Caco-2 (cell line): ENCODE measurements at regions of chr17 and their contacts with region 1.

Region 1: DNA sequence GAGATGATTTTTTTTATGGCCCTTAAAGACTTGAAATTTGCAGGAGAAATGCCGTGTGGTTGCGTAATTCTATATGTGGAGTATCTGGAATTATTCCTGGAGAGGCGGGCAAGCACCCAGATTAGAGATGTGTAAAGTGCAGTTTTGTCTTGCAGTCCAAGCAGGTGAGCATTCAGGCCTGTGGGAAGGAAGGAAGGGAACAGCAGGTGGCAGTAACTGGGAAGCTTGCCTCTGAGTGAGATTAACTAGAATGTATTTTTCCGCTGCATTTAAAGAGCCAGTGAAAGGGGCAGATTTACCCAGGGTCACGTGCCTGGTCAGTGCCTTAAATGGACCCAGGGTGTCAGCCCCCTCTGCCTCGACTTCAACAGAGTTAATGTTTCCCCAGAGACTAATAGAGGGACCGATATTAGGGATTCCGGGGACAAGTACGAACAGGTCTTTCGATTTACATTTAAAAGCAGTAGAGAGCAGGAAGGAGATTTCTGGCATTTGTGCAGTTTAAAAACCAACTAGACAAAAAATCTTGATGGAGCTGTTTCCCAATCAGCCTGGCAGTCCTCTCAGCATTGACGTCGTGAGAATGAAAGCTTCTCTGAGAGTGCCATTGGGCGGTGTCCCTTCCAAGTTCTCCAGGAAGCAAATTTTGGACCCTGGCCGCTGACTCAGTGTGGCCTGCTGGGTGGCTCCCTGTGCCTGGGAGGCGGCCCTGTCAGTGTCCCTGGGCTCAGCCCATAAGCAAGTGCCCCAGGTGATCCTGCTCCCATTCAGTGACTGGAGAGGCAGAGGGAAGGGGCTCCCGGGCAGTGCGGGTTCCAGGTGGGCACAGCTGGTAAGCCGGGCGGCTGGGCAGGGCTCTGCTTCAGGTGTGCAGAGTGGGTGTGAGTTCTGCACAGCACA is 38.2 kb downstream of the KSR1 start:
- DNase-seq: peak; percentile 92 to 94
- H3K4me3 ChIP-seq: peak overlapping the region; percentile 32
- H3K4me3 Mint-ChIP-seq: peak overlapping the region; percentile 82
- H3K27ac Mint-ChIP-seq: peak overlapping the region; percentile 92
- H3K4me1 ChIP-seq: peaks cover 73% of the 10 kb centered on the region
- H3K4me1 Mint-ChIP-seq: peaks cover 75% of the 10 kb centered on the region
- H3K27me3 ChIP-seq: no peaks in the 10 kb centered on the region
- H3K27me3 Mint-ChIP-seq: no peaks in the 10 kb centered on the region
- CTCF ChIP-seq: peak; percentile 88 to 99

Region 2: GRCh38 chr17:27236717-27237315 is 257.6 kb before region 1 on chr17:
- CTCF ChIA-PET with region 1: no interaction called
- POLR2A ChIA-PET with region 1: no interaction called
- intact Hi-C with region 1: loop called (anchors 10 kb)
- DNase-seq: peak; percentile 69 to 75
- H3K4me3 ChIP-seq: no peak overlapping the region
- H3K4me3 Mint-ChIP-seq: no peak overlapping the region
- H3K27ac Mint-ChIP-seq: no peak overlapping the region
- H3K4me1 ChIP-seq: peaks cover 27% of the 10 kb centered on the region
- H3K4me1 Mint-ChIP-seq: peaks cover 6% of the 10 kb centered on the region
- H3K27me3 ChIP-seq: no peaks in the 10 kb centered on the region
- H3K27me3 Mint-ChIP-seq: no peaks in the 10 kb centered on the region
- CTCF ChIP-seq: peak; percentile 89 to 94

Region 3: GRCh38 chr17:27414271-27414670 is 80.2 kb before region 1 on chr17:
- CTCF ChIA-PET with region 1: no interaction called
- POLR2A ChIA-PET with region 1: no interaction called
- intact Hi-C with region 1: no loop called
- DNase-seq: no peak
- H3K4me3 ChIP-seq: no peak overlapping the region
- H3K4me3 Mint-ChIP-seq: no peak overlapping the region
- H3K27ac Mint-ChIP-seq: no peak overlapping the region
- H3K4me1 ChIP-seq: no peaks in the 10 kb centered on the region
- H3K4me1 Mint-ChIP-seq: no peaks in the 10 kb centered on the region
- H3K27me3 ChIP-seq: no peaks in the 10 kb centered on the region
- H3K27me3 Mint-ChIP-seq: no peaks in the 10 kb centered on the region
- CTCF ChIP-seq: no peak

Region 4: DNA sequence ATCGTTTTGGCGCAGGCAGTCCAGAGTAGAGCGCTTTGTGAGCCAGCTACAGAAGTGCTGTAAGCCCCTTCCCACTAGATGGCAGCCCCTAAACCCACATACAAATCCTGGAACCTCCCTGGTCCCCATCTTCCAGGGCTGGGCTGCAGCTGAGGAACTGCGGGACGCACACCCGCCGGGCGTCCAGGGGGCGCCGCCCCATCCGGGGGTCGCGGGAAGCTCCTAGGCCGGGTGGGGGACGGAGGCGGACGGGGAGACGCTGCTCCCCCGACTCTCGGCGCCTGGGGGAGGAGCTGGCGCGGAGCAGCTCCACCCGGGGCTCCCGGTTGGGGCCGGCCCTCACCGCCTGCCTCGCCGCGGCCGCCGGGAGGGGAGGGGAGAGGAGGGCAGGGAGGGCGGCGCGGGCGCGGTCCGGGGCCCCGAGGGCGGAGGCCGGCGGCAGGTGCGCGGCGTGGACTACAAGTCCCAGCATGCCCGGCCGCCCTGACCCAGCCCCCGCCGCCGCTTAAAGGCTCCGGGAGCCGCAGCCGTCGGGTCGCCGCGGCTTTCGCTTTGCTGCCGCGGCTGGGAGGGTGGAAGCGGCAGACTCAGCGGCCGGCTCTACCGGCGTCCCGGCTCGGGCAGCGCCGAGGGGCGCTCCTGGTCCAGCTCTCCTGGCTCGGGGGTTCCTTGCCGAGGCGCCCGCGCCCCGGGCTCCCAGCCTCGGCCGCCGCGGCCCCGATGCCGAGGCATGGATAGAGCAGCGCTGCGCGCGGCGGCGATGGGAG is 38.3 kb before region 1 on chr17 and contains the start of gene KSR1:
- CTCF ChIA-PET with region 1: interaction called, 21 read pairs
- POLR2A ChIA-PET with region 1: interaction called, 9 read pairs
- intact Hi-C with region 1: loop called (anchors 1 kb)
- DNase-seq: peak; percentile 95 to 98
- H3K4me3 ChIP-seq: peak within 1 kb of the TSS; percentile 79
- H3K4me3 Mint-ChIP-seq: peak within 1 kb of the TSS; percentile 89
- H3K27ac Mint-ChIP-seq: peak within 1 kb of the TSS; percentile 76
- H3K4me1 ChIP-seq: peaks cover 30% of the 10 kb centered on the region
- H3K4me1 Mint-ChIP-seq: peaks cover 38% of the 10 kb centered on the region
- H3K27me3 ChIP-seq: no peaks in the 10 kb centered on the region
- H3K27me3 Mint-ChIP-seq: no peaks in the 10 kb centered on the region
- CTCF ChIP-seq: peak; percentile 90 to 99
- total RNA-seq, gene KSR1: 88.9 and 91.5 TPM in 2 replicates

Region 5: GRCh38 chr17:27532269-27533263 is 38.1 kb after region 1 on chr17:
- CTCF ChIA-PET with region 1: interaction called, 24 read pairs
- POLR2A ChIA-PET with region 1: interaction called, 8 read pairs
- intact Hi-C with region 1: loop called (anchors 1 kb)
- DNase-seq: peak; percentile 78 to 85
- H3K4me3 ChIP-seq: no peak overlapping the region
- H3K4me3 Mint-ChIP-seq: peak overlapping the region; percentile 15
- H3K27ac Mint-ChIP-seq: peak overlapping the region; percentile 90
- H3K4me1 ChIP-seq: peaks cover 65% of the 10 kb centered on the region
- H3K4me1 Mint-ChIP-seq: peaks cover 75% of the 10 kb centered on the region
- H3K27me3 ChIP-seq: no peaks in the 10 kb centered on the region
- H3K27me3 Mint-ChIP-seq: no peaks in the 10 kb centered on the region
- CTCF ChIP-seq: no peak

Region 6: GRCh38 chr17:27559506-27560481 is 65.4 kb after region 1 on chr17:
- CTCF ChIA-PET with region 1: no interaction called
- POLR2A ChIA-PET with region 1: interaction called, 15 read pairs
- intact Hi-C with region 1: no loop called
- DNase-seq: no peak
- H3K4me3 ChIP-seq: no peak overlapping the region
- H3K4me3 Mint-ChIP-seq: no peak overlapping the region
- H3K27ac Mint-ChIP-seq: peak overlapping the region; percentile 5
- H3K4me1 ChIP-seq: peaks cover 12% of the 10 kb centered on the region
- H3K4me1 Mint-ChIP-seq: peaks cover 22% of the 10 kb centered on the region
- H3K27me3 ChIP-seq: no peaks in the 10 kb centered on the region
- H3K27me3 Mint-ChIP-seq: no peaks in the 10 kb centered on the region
- CTCF ChIP-seq: no peak

Region 7: DNA sequence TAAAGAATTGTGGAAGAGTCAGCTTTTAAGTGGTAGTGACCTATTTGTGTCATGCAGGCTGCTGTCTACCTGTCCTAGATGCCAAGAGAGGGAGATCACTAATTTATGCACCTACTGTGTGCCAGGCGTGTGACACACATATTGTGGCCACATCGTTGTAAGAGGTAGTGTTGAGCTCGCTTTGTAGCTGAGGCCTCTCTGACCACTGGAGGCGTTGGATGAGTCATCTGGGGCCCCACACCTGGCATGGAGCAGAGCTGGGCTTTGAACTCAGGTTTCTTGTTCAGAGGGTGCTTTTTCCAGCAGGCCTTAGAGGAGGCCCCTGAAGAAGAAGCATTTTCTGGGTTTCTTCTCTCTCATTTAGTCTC is 84.3 kb after region 1 on chr17:
- CTCF ChIA-PET with region 1: interaction called, 17 read pairs
- POLR2A ChIA-PET with region 1: interaction called, 5 read pairs
- intact Hi-C with region 1: loop called (anchors 1 kb)
- DNase-seq: peak; percentile 57 to 77
- H3K4me3 ChIP-seq: no peak overlapping the region
- H3K4me3 Mint-ChIP-seq: no peak overlapping the region
- H3K27ac Mint-ChIP-seq: peak overlapping the region; percentile 89
- H3K4me1 ChIP-seq: peaks cover 68% of the 10 kb centered on the region
- H3K4me1 Mint-ChIP-seq: peaks cover 59% of the 10 kb centered on the region
- H3K27me3 ChIP-seq: no peaks in the 10 kb centered on the region
- H3K27me3 Mint-ChIP-seq: no peaks in the 10 kb centered on the region
- CTCF ChIP-seq: no peak

Region 8: GRCh38 chr17:27630607-27631410 is 136.4 kb after region 1 on chr17 and contains the start of gene LGALS9:
- CTCF ChIA-PET with region 1: no interaction called
- POLR2A ChIA-PET with region 1: no interaction called
- intact Hi-C with region 1: no loop called
- DNase-seq: no peak
- H3K4me3 ChIP-seq: no peak within 1 kb of the TSS
- H3K4me3 Mint-ChIP-seq: no peak within 1 kb of the TSS
- H3K27ac Mint-ChIP-seq: no peak within 1 kb of the TSS
- H3K4me1 ChIP-seq: no peaks in the 10 kb centered on the region
- H3K4me1 Mint-ChIP-seq: no peaks in the 10 kb centered on the region
- H3K27me3 ChIP-seq: no peaks in the 10 kb centered on the region
- H3K27me3 Mint-ChIP-seq: no peaks in the 10 kb centered on the region
- CTCF ChIP-seq: no peak
- total RNA-seq, gene LGALS9: 2.8 and 3.0 TPM in 2 replicates

Region 9: DNA sequence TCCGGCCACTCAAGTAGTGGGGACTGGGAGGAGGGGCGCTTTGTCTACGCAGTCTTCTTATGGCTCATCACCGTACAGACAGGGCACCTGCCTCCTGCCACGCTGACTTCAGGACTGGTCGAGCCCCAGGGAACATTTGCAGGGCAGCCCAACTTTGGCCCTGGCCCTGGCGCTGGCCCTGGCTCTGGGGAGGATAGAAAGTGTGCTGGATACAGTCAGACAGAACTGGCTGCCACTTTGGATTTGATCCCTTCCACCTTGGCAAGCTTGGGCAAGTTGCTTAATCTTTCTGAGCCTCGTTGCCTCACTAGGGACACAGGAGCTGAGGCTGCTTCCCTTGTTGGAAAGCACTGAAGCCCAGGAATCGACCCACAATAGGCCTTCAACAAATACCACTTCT is 150.1 kb after region 1 on chr17:
- CTCF ChIA-PET with region 1: no interaction called
- POLR2A ChIA-PET with region 1: no interaction called
- intact Hi-C with region 1: loop called (anchors 5 kb)
- DNase-seq: no peak
- H3K4me3 ChIP-seq: no peak overlapping the region
- H3K4me3 Mint-ChIP-seq: no peak overlapping the region
- H3K27ac Mint-ChIP-seq: no peak overlapping the region
- H3K4me1 ChIP-seq: peaks cover 11% of the 10 kb centered on the region
- H3K4me1 Mint-ChIP-seq: peaks cover 18% of the 10 kb centered on the region
- H3K27me3 ChIP-seq: no peaks in the 10 kb centered on the region
- H3K27me3 Mint-ChIP-seq: no peaks in the 10 kb centered on the region
- CTCF ChIP-seq: no peak